Heart right ventricle (tissue), 16 donors: ENCODE measurements at regions of chr1 and their contacts with region 1.

Region 1: DNA sequence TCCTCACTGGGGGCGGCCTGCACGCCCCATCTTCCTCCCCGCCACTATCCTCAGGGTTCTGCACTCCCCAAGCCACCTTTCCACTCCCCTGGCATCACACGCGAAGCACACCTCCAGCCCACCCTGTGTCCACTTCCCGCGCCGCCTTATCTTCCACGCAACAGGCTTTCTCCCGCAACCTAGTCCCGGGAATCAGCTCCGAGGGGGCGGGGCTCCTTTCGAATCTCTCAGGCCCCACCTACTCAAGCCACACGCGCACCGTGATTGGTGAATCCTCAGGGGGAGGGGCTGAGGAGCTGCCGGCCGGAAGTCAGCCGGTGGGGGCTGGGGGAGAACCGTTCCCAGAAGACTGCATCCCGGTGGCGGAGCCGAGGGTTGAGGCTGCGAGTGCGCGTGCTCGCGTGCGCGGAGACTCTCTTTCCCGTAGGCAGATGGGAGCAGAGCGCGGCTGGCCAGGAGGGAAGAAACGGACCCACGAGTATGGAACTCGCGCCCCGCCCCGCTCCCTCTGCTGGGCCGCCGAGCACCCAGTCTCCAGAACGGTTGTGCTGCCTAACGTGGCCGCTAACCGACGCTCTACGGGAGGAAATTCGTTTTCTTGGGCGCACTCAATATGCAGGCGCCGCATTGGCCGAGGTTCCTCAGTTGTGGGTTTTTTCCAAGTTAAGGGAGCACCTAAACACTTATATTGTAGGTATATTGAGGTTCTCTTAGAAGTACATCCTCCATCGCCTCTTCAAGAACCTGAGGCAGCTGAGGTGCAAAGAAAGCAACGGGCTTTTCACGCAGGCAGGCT is at the start of gene PSRC1:
- DNase-seq: peak; percentile 95 to 96
- ATAC-seq: peak; percentile 99 to 100 (median 99)
- H3K4me3 ChIP-seq: peak within 1 kb of the TSS; percentile 46 to 83 (median 72)
- H3K27ac ChIP-seq: peak within 1 kb of the TSS; percentile 68 to 92 (median 84)
- H3K4me1 ChIP-seq: peaks cover 4 to 31% (median 10%) of the 10 kb centered on the region in 9 donors
- H3K27me3 ChIP-seq: peaks cover 0 to 2% (median 0%) of the 10 kb centered on the region in 7 donors
- CTCF ChIP-seq: peak in 7 of 9 donors; percentile 34 to 76 (median 51)
- total RNA-seq, gene PSRC1: 0.34 to 2.4 (median 0.59) TPM

Region 2: DNA sequence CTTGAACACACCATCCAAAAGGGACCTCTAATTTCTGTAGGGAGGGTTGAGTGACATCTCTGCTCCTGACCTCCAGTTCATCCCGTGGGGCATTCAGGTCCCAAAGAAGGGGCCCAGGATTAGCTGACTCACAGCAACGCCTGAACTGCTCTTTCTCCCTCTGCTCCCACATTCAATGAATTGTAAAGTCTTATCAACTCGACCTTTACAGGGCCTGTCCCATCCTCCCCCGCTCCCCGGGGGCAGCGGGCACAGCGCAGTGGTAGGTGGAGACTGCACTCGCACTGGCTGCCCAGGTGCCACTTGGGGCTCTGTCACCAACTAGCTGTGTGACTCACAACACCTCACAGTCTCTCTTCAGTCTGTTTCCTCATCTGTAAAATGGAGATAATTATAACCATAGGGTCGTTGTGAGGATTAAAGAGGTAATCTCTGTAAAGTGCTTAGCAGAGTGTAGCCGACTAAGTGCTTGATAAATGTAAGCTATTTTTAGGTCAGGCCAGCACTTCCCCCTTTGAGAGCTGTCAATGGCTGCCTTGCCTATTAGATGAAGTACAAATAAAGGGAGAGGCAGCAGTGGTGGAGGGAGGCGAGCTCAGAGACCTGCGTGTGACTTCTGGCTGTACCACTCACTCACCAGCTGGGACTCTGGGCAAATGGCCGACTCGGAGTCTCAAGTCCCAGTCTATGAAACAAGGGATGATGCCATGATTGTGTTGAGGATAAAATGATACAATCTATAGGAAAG is 24.3 kb after region 1 on chr1:
- intact Hi-C with region 1: loop called in 1 of 10 experiments (anchors 2 kb)
- DNase-seq: peak; percentile 27 to 52
- ATAC-seq: peak; percentile 57 to 96 (median 78)
- H3K4me3 ChIP-seq: no peak overlapping the region
- H3K27ac ChIP-seq: peak overlapping the region in 9 of 10 donors; percentile 4 to 72 (median 51)
- H3K4me1 ChIP-seq: peaks cover 9 to 54% (median 38%) of the 10 kb centered on the region in 9 donors
- H3K27me3 ChIP-seq: no peaks in the 10 kb centered on the region
- CTCF ChIP-seq: no peak